Sigmoid colon (tissue), 7 donors: ENCODE measurements at regions of chr4 and their contacts with region 1.

Region 1: DNA sequence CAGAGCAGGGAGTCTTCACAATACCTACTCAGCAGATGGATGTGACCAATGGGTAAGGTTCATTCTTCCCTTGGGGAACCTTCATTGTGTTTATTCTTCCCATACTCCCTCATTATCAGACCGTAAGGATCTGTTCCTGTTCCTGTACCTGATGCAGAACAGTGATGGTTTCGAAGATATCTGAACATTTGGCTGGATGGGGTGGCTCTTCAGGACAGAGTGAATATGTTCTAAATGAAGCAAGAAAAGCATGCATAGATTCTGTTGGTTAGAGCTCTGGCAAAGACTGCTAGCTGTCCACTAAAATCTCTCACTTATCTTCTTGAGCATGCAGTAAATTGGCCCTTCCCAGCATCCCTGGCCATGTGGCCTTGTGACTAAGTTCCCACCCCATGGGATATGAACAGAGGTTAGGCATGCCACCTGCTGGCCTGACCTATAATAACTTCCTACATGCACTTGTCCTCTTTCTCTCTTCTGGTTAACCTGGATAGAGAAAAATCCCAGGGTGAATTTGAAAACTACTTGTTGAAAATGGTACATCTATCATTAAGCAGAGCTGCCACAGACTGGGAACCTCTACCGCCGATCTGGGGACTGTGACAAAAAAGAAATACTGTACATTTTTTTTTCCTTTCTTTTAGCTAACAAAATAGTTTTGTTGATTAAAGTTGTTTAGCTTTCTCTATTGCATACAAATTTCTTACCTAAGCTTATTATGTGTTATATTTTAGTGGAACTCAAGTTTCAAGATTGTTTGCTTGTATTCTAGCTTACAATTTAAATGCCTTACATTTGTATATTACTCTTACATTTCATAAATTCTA is 60.0 kb upstream of the BANK1 start:
- DNase-seq: peak; percentile 79
- H3K4me3 ChIP-seq: no peak overlapping the region
- H3K27ac ChIP-seq: no peak overlapping the region
- H3K4me1 ChIP-seq: no peaks in the 10 kb centered on the region
- H3K27me3 ChIP-seq: no peaks in the 10 kb centered on the region
- CTCF ChIP-seq: peak in 3 of 4 experiments; percentile 43 to 64 (median 54)
- EP300 ChIP-seq: no peak
- POLR2A ChIP-seq: no peak

Region 2: DNA sequence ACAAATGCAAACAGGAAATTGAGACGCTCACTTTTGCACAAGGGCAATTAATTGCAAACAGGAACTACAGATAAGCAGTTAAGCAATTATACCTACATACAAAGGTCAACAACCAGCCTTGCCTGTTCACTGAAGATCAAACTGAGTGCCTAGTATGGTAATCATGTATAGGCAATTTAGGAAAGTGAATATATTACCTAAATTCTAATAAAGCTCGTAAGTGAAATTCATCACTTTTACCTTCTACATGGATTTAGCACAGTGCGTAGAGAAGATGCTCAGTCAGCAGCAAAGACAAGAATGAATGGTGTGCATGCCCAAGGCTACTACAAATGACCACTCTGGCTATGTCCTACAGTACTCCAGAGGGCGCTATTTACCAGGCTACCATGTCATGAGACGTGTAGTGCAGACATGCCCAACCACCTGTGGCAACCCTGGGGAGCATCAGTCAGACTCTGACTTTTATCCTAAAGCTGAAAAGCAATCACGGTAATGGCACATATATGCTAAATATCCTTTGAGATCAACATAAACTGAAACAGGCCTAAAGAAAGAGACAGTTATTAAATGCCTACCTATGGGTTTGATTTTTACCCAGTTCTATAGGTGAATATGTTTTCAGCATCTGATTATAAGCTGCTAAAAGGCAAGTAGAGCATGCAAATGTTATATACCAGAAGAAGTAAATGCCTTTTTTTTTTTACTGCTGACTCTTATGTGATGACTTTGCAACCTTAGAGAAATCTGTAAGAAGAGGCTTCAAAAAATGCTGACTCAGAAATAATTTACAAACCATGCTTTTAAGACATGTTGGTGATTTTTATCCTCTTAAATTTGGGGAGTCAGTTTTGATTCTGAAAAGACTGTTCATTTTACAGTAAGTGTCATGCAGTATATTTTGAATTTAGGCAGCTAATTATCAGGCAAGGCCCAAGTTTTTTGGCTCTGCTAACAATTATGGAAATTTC is 561.2 kb before region 1 on chr4:
- intact Hi-C with region 1: loop called (anchors 2 kb)
- DNase-seq: peak; percentile 69
- H3K4me3 ChIP-seq: no peak overlapping the region
- H3K27ac ChIP-seq: no peak overlapping the region
- H3K4me1 ChIP-seq: peaks cover 0 to 31% (median 5%) of the 10 kb centered on the region in 4 donors
- H3K27me3 ChIP-seq: no peaks in the 10 kb centered on the region
- CTCF ChIP-seq: peak; percentile 11 to 65 (median 42)
- EP300 ChIP-seq: no peak
- POLR2A ChIP-seq: no peak

Region 3: DNA sequence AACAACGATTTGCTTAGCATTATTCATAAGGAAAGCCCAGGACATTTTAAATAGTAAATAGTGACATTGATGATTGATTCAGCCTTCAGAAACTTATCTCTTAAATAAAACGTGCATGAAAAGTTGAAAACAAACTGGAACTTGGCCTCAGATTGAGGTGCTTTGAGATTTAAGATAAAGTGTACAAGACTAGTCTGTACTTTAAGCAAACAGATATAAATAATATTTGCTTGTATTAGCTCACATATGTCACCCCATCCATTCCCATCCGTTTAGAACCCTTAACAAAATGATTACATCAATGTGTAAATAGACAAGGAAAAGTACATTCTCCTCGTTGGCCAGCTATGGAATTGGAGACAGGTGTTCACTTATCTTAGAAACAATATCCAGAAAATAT is 190.8 kb after region 1 on chr4:
- intact Hi-C with region 1: no loop called
- DNase-seq: no peak
- H3K4me3 ChIP-seq: no peak overlapping the region
- H3K27ac ChIP-seq: no peak overlapping the region
- H3K4me1 ChIP-seq: no peaks in the 10 kb centered on the region
- H3K27me3 ChIP-seq: no peaks in the 10 kb centered on the region
- CTCF ChIP-seq: no peak
- EP300 ChIP-seq: no peak
- POLR2A ChIP-seq: no peak